MCF 10A (cell line): ENCODE measurements at regions of chr17 and their contacts with region 1.

Region 1: GRCh38 chr17:979538-980405 is at the start of gene NXN:
- DNase-seq: peak; percentile 58
- H3K4me3 Mint-ChIP-seq: peak within 1 kb of the TSS; percentile 76
- H3K27ac Mint-ChIP-seq: no peak within 1 kb of the TSS
- H3K4me1 Mint-ChIP-seq: peaks cover 5% of the 10 kb centered on the region
- H3K27me3 Mint-ChIP-seq: no peaks in the 10 kb centered on the region
- CTCF ChIP-seq: peak; percentile 20
- total RNA-seq, gene NXN: 36.8 and 57.3 TPM in 2 replicates

Region 2: GRCh38 chr17:409848-410545 is 569.8 kb before region 1 on chr17:
- CTCF ChIA-PET with region 1: interaction called, 11 read pairs
- POLR2A ChIA-PET with region 1: interaction called, 4 read pairs
- intact Hi-C with region 1: loop called (anchors 2 kb)
- DNase-seq: peak; percentile 99
- H3K4me3 Mint-ChIP-seq: peak overlapping the region; percentile 83
- H3K27ac Mint-ChIP-seq: peak overlapping the region; percentile 91
- H3K4me1 Mint-ChIP-seq: peaks cover 14% of the 10 kb centered on the region
- H3K27me3 Mint-ChIP-seq: no peaks in the 10 kb centered on the region
- CTCF ChIP-seq: no peak

Region 3: GRCh38 chr17:781805-782731 is 197.7 kb before region 1 on chr17 and contains the starts of genes GLOD4 and MRM3:
- CTCF ChIA-PET with region 1: interaction called, 41 read pairs
- POLR2A ChIA-PET with region 1: interaction called, 39 read pairs
- intact Hi-C with region 1: loop called (anchors 1 kb)
- DNase-seq: peak; percentile 77
- H3K4me3 Mint-ChIP-seq: peak within 1 kb of the TSS; percentile 99
- H3K27ac Mint-ChIP-seq: peak within 1 kb of the TSS; percentile 98
- H3K4me1 Mint-ChIP-seq: peaks cover 10% of the 10 kb centered on the region
- H3K27me3 Mint-ChIP-seq: no peaks in the 10 kb centered on the region
- CTCF ChIP-seq: no peak
- total RNA-seq, gene GLOD4: 59.0 and 62.6 TPM in 2 replicates
- total RNA-seq, gene MRM3: 19.4 and 25.1 TPM in 2 replicates

Region 4: GRCh38 chr17:861364-861763 is 118.4 kb before region 1 on chr17:
- CTCF ChIA-PET with region 1: interaction called, 10 read pairs
- POLR2A ChIA-PET with region 1: no interaction called
- intact Hi-C with region 1: no loop called
- DNase-seq: no peak
- H3K4me3 Mint-ChIP-seq: no peak overlapping the region
- H3K27ac Mint-ChIP-seq: no peak overlapping the region
- H3K4me1 Mint-ChIP-seq: no peaks in the 10 kb centered on the region
- H3K27me3 Mint-ChIP-seq: no peaks in the 10 kb centered on the region
- CTCF ChIP-seq: no peak

Region 5: DNA sequence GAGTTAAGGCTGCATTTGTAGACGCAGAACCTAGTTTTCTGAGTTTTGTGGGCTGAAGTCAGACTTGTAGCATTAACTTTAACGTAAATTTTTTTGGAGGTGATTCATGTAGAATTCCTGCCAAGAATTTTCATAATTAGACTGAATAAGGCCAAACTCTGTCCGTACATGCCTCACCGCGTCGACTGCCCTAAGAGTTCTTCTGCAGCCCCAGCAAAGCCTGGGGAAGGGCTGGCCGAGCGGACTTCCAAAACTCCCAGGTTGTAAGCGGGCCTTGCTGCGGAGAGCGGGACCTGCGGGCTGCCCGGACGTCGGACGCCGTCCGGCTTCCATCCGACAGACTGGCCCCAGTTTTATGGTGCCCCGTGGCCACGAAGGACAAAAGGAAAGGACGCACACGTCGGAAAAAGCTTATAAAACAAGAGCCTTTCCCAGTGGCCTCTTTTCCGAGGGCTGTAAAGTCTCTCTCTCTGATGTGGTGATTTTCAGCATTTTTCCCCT is 75.7 kb before region 1 on chr17:
- CTCF ChIA-PET with region 1: interaction called, 4 read pairs
- POLR2A ChIA-PET with region 1: interaction called, 6 read pairs
- intact Hi-C with region 1: loop called (anchors 2 kb)
- DNase-seq: peak; percentile 90
- H3K4me3 Mint-ChIP-seq: peak overlapping the region; percentile 61
- H3K27ac Mint-ChIP-seq: peak overlapping the region; percentile 99
- H3K4me1 Mint-ChIP-seq: peaks cover 31% of the 10 kb centered on the region
- H3K27me3 Mint-ChIP-seq: no peaks in the 10 kb centered on the region
- CTCF ChIP-seq: no peak

Region 6: GRCh38 chr17:927611-928461 is 51.9 kb before region 1 on chr17:
- CTCF ChIA-PET with region 1: interaction called, 6 read pairs
- POLR2A ChIA-PET with region 1: interaction called, 171 read pairs
- intact Hi-C with region 1: no loop called
- DNase-seq: peak; percentile 94
- H3K4me3 Mint-ChIP-seq: peak overlapping the region; percentile 70
- H3K27ac Mint-ChIP-seq: peak overlapping the region; percentile 95
- H3K4me1 Mint-ChIP-seq: peaks cover 49% of the 10 kb centered on the region
- H3K27me3 Mint-ChIP-seq: no peaks in the 10 kb centered on the region
- CTCF ChIP-seq: no peak